Prostate gland (tissue), 2 donors: ENCODE measurements at regions of chr9 and their contacts with region 1.

Region 1: GRCh38 chr9:130780865-130781504 is 54.1 kb upstream of the ABL1 start:
- DNase-seq: no peak
- H3K4me3 ChIP-seq: peak overlapping the region in 1 of 2 donors; percentile 5
- H3K27ac ChIP-seq: peak overlapping the region; percentile 70 to 80
- H3K4me1 ChIP-seq: peaks cover 4% of the 10 kb centered on the region
- H3K27me3 ChIP-seq: no peaks in the 10 kb centered on the region
- CTCF ChIP-seq: no peak
- POLR2A ChIP-seq: no peak

Region 2: GRCh38 chr9:130824643-130825350 is 43.8 kb after region 1 on chr9:
- intact Hi-C with region 1: loop called (anchors 2 kb)
- DNase-seq: no peak
- H3K4me3 ChIP-seq: no peak overlapping the region
- H3K27ac ChIP-seq: peak overlapping the region; percentile 45 to 68
- H3K4me1 ChIP-seq: no peaks in the 10 kb centered on the region
- H3K27me3 ChIP-seq: no peaks in the 10 kb centered on the region
- CTCF ChIP-seq: no peak
- POLR2A ChIP-seq: no peak

Region 3: GRCh38 chr9:130847327-130848217 is 66.6 kb after region 1 on chr9:
- intact Hi-C with region 1: loop called (anchors 2 kb)
- DNase-seq: no peak
- H3K4me3 ChIP-seq: no peak overlapping the region
- H3K27ac ChIP-seq: peak overlapping the region; percentile 57 to 73
- H3K4me1 ChIP-seq: peaks cover 7% of the 10 kb centered on the region
- H3K27me3 ChIP-seq: no peaks in the 10 kb centered on the region
- CTCF ChIP-seq: no peak
- POLR2A ChIP-seq: no peak

Region 4: DNA sequence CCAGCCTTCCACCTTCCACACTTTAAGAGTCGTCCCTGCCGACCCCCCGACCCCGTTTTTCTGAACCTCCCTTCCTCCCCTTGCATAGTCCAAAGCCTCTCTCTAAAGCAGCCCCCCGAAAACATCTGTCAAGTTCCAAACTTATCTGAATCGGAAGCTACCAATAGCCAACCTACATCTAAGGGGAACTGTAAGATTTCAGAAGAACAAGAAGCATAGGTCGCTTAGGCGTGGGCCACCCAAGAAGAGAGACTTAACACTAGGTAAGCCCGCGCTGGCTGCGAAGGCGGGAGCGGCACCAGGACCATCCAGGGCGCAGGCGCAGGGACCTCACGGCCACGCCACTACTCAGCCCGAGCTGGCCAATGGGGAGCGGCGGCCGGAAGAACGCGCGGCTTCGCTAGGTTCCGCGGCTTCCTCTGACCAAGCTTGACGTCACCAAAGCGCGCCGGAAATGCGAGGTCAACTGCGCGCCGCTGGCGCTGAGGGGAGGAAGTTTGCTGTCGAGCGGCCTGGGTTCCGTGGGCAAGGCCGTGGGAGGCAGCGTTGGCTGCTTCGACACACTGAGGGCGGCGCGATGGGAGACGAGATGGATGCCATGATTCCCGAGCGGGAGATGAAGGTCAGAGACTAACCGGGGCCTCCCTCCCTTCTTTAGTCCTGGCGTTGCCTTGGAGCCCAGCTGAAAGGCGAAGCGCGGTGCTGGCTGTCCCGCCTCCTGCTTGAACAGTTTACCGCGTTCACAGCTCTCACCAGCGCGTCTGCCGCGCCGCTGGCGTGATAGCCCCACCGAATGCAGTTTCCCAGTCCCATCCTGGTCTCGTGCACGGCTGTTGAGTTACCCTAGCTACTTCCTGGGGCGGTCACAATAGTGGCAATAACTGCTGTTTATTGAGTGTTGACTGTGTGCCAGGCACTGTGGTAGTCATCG is 344.4 kb after region 1 on chr9 and contains the start of gene NUP214:
- intact Hi-C with region 1: no loop called
- DNase-seq: peak; percentile 98
- H3K4me3 ChIP-seq: peak within 1 kb of the TSS; percentile 62 to 84
- H3K27ac ChIP-seq: peak within 1 kb of the TSS; percentile 70 to 74
- H3K4me1 ChIP-seq: peaks cover 5% of the 10 kb centered on the region
- H3K27me3 ChIP-seq: no peaks in the 10 kb centered on the region
- CTCF ChIP-seq: peak in 2 of 4 experiments; percentile 35 to 37
- POLR2A ChIP-seq: peak; percentile 75
- total RNA-seq, gene NUP214: 43.9 to 115 TPM